Naive thymus-derived CD4-positive, alpha-beta T cell (primary cell): ENCODE measurements at regions of chr20 and their contacts with region 1.

Region 1: DNA sequence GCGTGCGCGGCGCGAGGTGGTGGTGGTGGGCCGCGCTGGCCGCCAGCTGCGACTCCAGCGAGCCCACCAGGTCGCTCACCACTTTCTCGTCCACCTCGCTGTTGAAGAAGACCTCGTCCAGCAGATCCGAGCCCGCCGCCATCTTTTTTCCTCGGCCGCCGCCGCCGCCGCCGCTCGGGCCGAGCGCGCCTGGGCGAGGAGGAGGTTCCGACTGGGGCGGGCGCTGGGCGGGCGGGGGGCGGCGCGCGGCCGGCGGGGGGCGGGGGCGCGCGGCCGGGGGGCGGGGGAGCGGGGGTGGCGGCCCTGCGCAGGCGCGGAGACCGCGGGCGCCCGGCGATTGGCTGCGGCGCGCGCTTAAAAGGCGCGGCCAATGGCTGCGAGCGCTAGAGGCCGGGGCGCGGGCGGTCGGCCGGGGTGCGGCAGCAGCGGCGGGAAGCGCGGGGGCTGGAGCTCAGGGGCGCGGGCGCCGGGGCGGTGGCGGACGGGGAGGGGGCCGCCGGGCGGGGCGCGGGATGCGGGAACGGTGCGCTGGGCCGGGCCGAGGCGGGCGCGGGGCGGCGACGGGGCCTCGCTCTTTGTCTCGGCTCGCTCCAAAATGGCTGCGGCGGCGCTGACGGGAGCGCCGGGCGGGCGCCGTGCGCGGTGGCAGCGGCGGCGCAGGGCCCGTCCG is at the start of gene TAF4:
- DNase-seq: peak; percentile 70 to 89 (median 81)
- ATAC-seq: peak; percentile 85
- H3K4me3 ChIP-seq: peak within 1 kb of the TSS; percentile 64
- H3K4me3 Mint-ChIP-seq: peak within 1 kb of the TSS; percentile 82 to 92 (median 89)
- H3K27ac ChIP-seq: peak within 1 kb of the TSS; percentile 78
- H3K27ac Mint-ChIP-seq: peak within 1 kb of the TSS; percentile 89 to 97 (median 93)
- H3K4me1 ChIP-seq: peaks cover 23 to 29% of the 10 kb centered on the region in 2 donors
- H3K4me1 Mint-ChIP-seq: peaks cover 25 to 56% (median 50%) of the 10 kb centered on the region in 7 donors
- H3K27me3 ChIP-seq: no peaks in the 10 kb centered on the region
- H3K27me3 Mint-ChIP-seq: peaks cover 0 to 2% (median 0%) of the 10 kb centered on the region in 5 donors
- total RNA-seq, gene TAF4: 19.8 to 43.7 (median 23.7) TPM

Region 2: DNA sequence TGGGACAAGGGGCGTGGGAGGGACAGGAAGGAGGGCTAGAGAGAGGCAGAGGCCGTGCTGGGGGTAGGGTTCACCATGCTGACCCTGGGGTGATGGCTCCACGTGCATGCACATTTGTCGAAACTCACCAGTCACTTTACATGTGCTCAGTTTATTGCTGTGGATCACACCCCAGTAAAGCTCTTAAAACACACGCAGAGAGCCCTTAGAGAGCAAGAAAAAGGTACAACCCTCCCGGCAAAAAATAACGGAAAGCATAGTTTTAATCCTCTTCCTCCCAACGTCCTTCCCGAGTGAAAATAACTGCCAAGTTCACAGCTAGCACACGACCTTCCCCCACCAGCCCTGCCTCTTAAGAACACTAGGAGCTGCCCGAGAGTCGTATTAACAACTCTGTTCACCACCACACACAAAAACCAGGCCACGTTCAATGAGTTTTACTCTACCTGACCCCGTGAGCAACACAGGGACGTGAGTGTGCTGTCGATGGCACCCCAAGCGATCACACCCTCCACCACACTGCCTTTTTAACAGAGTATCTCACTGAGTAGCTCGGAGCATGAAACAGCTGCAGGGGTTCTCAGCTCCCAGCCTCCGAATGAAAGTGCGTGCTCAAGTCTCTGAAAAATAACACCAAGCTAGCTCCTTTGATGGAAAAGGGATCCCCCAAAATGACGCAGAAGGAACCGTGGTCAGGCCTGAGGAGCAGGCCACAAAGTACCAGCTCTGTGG is 39.8 kb before region 1 on chr20:
- CTCF ChIA-PET with region 1: interaction called, 3 read pairs
- POLR2A ChIA-PET with region 1: interaction called, 15 read pairs
- intact Hi-C with region 1: loop called in 1 of 2 experiments (anchors 1 kb)
- DNase-seq: peak in 7 of 9 donors; percentile 39 to 58 (median 50)
- ATAC-seq: peak; percentile 75
- H3K4me3 ChIP-seq: no peak overlapping the region
- H3K4me3 Mint-ChIP-seq: peak overlapping the region in 6 of 10 donors; percentile 5 to 56 (median 26)
- H3K27ac ChIP-seq: no peak overlapping the region
- H3K27ac Mint-ChIP-seq: peak overlapping the region in 8 of 9 donors; percentile 2 to 79 (median 44)
- H3K4me1 ChIP-seq: peaks cover 5 to 21% of the 10 kb centered on the region in 2 donors
- H3K4me1 Mint-ChIP-seq: peaks cover 25 to 73% (median 55%) of the 10 kb centered on the region in 7 donors
- H3K27me3 ChIP-seq: no peaks in the 10 kb centered on the region
- H3K27me3 Mint-ChIP-seq: no peaks in the 10 kb centered on the region

Region 3: GRCh38 chr20:62136283-62137091 is 70.7 kb after region 1 on chr20:
- CTCF ChIA-PET with region 1: interaction called, 14 read pairs
- POLR2A ChIA-PET with region 1: interaction called, 43 read pairs
- intact Hi-C with region 1: loop called in 1 of 2 experiments (anchors 1 kb)
- DNase-seq: peak; percentile 54 to 81 (median 75)
- ATAC-seq: peak; percentile 81
- H3K4me3 ChIP-seq: no peak overlapping the region
- H3K4me3 Mint-ChIP-seq: peak overlapping the region in 1 of 10 donors; percentile 20
- H3K27ac ChIP-seq: peak overlapping the region; percentile 18
- H3K27ac Mint-ChIP-seq: peak overlapping the region; percentile 60 to 94 (median 87)
- H3K4me1 ChIP-seq: peaks cover 10 to 15% of the 10 kb centered on the region in 2 donors
- H3K4me1 Mint-ChIP-seq: peaks cover 33 to 55% (median 45%) of the 10 kb centered on the region in 7 donors
- H3K27me3 ChIP-seq: no peaks in the 10 kb centered on the region
- H3K27me3 Mint-ChIP-seq: no peaks in the 10 kb centered on the region

Region 4: DNA sequence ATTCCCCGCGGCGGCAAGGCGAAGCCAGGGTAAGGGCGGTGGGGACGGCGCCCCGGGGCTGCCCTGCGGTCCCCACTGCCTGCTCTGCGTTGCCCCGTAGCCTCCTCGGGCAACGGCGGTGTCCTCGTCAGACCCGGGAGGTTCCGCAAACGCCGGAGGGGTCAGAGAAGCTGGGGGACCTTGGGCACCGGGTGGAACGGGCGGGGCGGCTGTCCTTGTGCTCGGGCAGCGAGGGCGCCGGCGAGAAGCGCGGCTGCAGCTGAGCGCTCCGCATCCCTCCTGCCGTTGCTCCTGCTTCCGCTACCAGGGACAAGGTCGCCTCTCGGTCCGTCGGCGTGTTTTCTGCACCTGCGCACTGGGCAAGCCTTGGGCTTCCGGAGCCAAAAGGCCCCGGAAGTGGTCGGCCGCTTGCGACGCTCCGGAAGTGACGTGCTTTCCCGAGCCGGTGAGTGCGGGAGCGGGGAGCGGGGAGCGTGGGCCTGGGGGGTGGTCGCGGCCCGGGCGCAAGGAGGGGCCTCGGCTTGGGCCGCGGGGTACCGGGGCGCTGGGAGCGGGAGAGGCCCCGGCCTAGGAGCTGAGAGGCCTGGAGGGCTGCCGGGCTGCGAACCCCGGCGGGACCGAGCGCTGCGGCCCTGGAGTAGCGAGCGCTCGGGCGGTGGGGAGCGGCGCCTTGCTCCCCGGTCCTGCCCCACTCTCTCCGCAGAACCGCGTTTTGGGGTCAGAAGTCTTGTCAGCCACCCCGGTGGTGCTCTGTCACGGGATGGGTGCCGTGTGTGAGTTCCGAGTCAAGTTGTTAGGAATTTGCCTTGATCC is 117.0 kb after region 1 on chr20 and contains the start of gene MTG2:
- CTCF ChIA-PET with region 1: no interaction called
- POLR2A ChIA-PET with region 1: interaction called, 7 read pairs
- intact Hi-C with region 1: loop called (anchors 1 kb)
- DNase-seq: peak; percentile 81 to 94 (median 93)
- ATAC-seq: peak; percentile 95
- H3K4me3 ChIP-seq: peak within 1 kb of the TSS; percentile 87
- H3K4me3 Mint-ChIP-seq: peak within 1 kb of the TSS; percentile 84 to 95 (median 90)
- H3K27ac ChIP-seq: peak within 1 kb of the TSS; percentile 92
- H3K27ac Mint-ChIP-seq: peak within 1 kb of the TSS; percentile 90 to 97 (median 95)
- H3K4me1 ChIP-seq: peaks cover 9 to 16% of the 10 kb centered on the region in 2 donors
- H3K4me1 Mint-ChIP-seq: peaks cover 15 to 55% (median 42%) of the 10 kb centered on the region in 7 donors
- H3K27me3 ChIP-seq: no peaks in the 10 kb centered on the region
- H3K27me3 Mint-ChIP-seq: no peaks in the 10 kb centered on the region
- total RNA-seq, gene MTG2: 20.4 to 51.5 (median 41.8) TPM

Region 5: GRCh38 chr20:62193079-62194025 is 127.5 kb after region 1 on chr20:
- CTCF ChIA-PET with region 1: no interaction called
- POLR2A ChIA-PET with region 1: no interaction called
- intact Hi-C with region 1: no loop called
- DNase-seq: no peak
- ATAC-seq: no peak
- H3K4me3 ChIP-seq: no peak overlapping the region
- H3K4me3 Mint-ChIP-seq: no peak overlapping the region
- H3K27ac ChIP-seq: no peak overlapping the region
- H3K27ac Mint-ChIP-seq: peak overlapping the region in 2 of 9 donors; percentile 9 to 21
- H3K4me1 ChIP-seq: no peaks in the 10 kb centered on the region
- H3K4me1 Mint-ChIP-seq: peaks cover 0 to 8% (median 5%) of the 10 kb centered on the region in 7 donors
- H3K27me3 ChIP-seq: no peaks in the 10 kb centered on the region
- H3K27me3 Mint-ChIP-seq: no peaks in the 10 kb centered on the region

Region 6: DNA sequence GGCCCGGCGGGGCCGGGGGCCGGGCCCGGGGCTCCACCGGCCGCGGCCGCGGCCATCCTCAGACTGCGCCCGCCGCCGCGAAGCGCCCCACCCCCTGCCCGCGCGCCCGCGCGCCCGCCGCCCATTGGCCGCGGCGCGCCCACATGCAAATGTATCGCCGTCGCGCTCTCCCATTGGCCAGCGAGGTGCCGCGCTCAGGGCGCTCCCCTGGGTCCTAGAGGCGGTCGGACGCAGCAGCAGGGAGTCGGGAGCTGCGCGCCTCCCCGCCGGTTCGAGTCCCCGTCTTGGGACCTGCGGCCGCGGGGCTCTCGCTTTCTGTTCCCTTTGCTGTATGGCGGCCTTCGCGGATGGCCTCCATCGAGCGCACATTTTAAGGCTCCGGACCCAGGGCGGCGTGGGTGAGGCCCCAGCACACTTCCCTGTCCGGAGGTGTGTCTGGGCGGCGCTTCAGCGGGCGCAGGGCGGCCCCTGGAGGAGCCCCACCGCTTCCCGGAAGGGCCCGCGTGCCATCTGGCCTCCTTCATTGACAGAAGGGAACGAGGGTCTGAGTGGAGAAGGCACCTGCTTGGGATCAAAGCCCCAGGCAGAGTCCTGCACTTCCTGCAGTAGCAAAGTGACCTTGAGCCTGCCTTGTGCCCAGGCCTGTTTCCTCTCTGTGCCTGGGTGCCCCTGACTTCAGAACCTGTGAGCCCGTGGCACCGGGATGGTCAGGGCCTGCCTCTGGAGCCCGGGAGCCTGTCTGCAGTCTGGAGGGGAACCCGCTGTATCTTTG is 341.6 kb after region 1 on chr20 and contains the start of gene CABLES2:
- CTCF ChIA-PET with region 1: no interaction called
- POLR2A ChIA-PET with region 1: interaction called, 3 read pairs
- intact Hi-C with region 1: loop called in 1 of 2 experiments (anchors 2 kb)
- DNase-seq: peak; percentile 86 to 94 (median 91)
- ATAC-seq: peak; percentile 98
- H3K4me3 ChIP-seq: peak within 1 kb of the TSS; percentile 74
- H3K4me3 Mint-ChIP-seq: peak within 1 kb of the TSS; percentile 68 to 90 (median 82)
- H3K27ac ChIP-seq: peak within 1 kb of the TSS; percentile 76
- H3K27ac Mint-ChIP-seq: peak within 1 kb of the TSS in 8 of 9 donors; percentile 52 to 88 (median 68)
- H3K4me1 ChIP-seq: peaks cover 17 to 23% of the 10 kb centered on the region in 2 donors
- H3K4me1 Mint-ChIP-seq: peaks cover 19 to 31% (median 26%) of the 10 kb centered on the region in 7 donors
- H3K27me3 ChIP-seq: no peaks in the 10 kb centered on the region
- H3K27me3 Mint-ChIP-seq: peaks cover 0 to 3% (median 0%) of the 10 kb centered on the region in 5 donors
- total RNA-seq, gene CABLES2: 4.3 to 16.7 (median 6.3) TPM